ENCODE measurements at regions of chr5 and their contacts with region 1.

Region 1: DNA sequence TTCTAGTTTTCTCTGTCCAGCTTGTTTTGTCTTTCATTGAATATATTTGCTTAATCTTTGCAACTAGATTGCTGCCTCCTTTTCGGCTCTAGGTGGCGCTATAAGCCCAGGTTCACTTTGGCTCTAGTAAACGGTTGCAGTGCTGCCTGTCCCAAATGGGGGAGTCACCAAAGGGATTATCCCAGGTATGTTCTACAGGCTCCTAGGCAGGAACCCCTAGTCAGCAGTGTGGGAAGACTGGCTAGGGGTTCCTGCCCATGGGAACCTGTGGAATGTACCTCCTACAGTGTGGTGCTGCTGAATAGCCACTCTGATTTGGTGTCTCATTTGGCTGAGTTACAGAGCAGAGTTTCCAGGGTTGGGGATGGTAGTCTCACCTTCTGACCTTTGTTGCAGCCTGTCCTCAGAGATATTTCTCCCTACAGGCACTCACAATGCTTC is 85.2 kb downstream of the ARSB start:
- DNase-seq: peak; percentile 74
- ATAC-seq: peak; percentile 98
- H3K4me3 Mint-ChIP-seq: no peak overlapping the region
- H3K27ac Mint-ChIP-seq: no peak overlapping the region
- H3K4me1 Mint-ChIP-seq: peaks cover 2% of the 10 kb centered on the region
- H3K27me3 Mint-ChIP-seq: no peaks in the 10 kb centered on the region
- CTCF ChIP-seq: peak; percentile 79

Region 2: DNA sequence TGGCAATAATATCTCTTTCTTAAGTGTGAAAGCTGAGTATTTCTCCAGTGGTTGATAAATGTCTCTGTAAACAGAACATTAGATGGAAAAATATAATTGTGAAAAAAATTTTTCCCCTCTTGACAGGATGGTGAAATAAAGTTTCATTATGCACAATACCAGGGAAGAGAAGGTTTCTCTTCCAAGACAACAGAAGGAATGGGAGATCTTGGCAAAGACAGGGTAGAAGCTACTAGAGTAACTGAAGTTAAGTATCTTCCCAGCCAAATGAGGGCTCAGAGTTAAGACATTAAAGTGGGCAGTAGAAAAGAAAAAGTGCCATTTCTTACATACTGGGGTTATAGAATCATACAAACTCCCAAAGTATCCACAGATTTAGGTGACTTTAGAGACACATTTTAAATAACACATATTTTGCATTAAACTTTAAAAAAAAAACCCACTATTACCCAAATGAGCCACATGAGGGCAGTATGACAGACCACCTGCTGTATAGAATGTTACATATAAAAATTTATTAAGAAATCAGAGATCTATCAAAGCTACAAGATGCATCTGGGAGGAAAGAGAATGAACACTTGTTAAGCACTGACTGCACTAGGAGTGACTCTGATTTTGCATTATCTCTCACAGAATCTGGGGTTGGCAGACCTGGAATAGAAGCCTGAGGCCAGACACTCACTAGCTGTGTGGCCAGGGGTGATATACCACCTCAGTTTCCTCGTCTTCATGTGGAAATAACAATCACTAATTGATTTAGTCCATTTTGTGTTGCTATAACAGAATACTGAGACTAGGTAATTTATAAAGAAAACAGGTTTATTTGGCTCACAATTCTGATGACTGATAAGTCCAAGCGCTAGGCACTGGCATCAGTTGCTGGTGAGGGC is 13.4 kb before region 1 on chr5:
- CTCF ChIA-PET with region 1: interaction called, 23 read pairs
- POLR2A ChIA-PET with region 1: no interaction called
- DNase-seq: no peak
- ATAC-seq: no peak
- H3K4me3 Mint-ChIP-seq: no peak overlapping the region
- H3K27ac Mint-ChIP-seq: no peak overlapping the region
- H3K4me1 Mint-ChIP-seq: peaks cover 5% of the 10 kb centered on the region; the same call in 1 of the 2 replicates
- H3K27me3 Mint-ChIP-seq: no peaks in the 10 kb centered on the region
- CTCF ChIP-seq: peak; percentile 48; the same call in 1 of the 2 replicates

Region 3: GRCh38 chr5:78920604-78921003 is 20.7 kb after region 1 on chr5:
- CTCF ChIA-PET with region 1: interaction called, 25 read pairs
- POLR2A ChIA-PET with region 1: no interaction called
- DNase-seq: no peak
- ATAC-seq: peak; percentile 91
- H3K4me3 Mint-ChIP-seq: no peak overlapping the region
- H3K27ac Mint-ChIP-seq: no peak overlapping the region
- H3K4me1 Mint-ChIP-seq: peaks cover 12% of the 10 kb centered on the region
- H3K27me3 Mint-ChIP-seq: no peaks in the 10 kb centered on the region
- CTCF ChIP-seq: no peak

Region 4: GRCh38 chr5:78964887-78965286 is 64.9 kb after region 1 on chr5:
- CTCF ChIA-PET with region 1: interaction called, 34 read pairs
- POLR2A ChIA-PET with region 1: no interaction called
- DNase-seq: no peak
- ATAC-seq: 0 out of 2 replicates have a peak, but pooled peaks have one; percentile 53
- H3K4me3 Mint-ChIP-seq: no peak overlapping the region
- H3K27ac Mint-ChIP-seq: no peak overlapping the region
- H3K4me1 Mint-ChIP-seq: no peaks in the 10 kb centered on the region
- H3K27me3 Mint-ChIP-seq: no peaks in the 10 kb centered on the region
- CTCF ChIP-seq: no peak

Region 5: DNA sequence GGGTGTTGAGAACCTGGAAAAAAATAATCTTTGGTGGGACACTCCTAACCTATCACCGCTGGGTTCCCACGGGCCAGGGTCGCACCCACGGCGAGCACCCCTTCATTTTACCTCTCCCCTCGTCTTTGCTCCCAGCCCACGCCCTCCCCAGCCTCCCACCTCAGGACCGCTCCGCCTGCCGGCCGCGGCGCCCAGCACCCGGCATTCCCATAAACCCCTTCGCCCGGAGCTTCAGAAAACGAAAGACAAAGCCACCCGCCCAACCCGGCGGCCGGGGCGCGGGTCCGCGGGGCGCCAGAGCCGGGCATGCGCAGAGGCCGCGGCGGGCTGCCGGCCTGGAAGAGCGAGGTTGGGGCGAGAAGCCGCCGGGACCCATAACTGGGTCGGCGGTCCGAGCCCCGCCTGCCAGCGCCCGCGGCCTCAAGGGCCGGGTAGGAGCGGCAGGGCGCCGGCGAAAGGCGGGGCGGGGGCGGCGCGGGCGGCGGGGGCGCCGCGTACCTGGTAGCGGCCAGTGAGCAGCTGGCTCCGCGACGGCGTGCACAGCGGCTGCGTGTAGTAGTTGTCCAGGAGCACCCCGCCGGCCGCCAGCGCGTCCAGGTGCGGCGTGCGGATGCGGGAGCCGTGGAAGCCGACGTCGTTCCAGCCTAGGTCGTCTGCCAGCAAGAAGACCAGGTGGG is 84.6 kb after region 1 on chr5:
- CTCF ChIA-PET with region 1: interaction called, 10 read pairs
- POLR2A ChIA-PET with region 1: interaction called, 3 read pairs
- DNase-seq: peak; percentile 84
- ATAC-seq: peak; percentile 92
- H3K4me3 Mint-ChIP-seq: peak overlapping the region; percentile 75
- H3K27ac Mint-ChIP-seq: peak overlapping the region; percentile 92; the same call in 1 of the 2 replicates
- H3K4me1 Mint-ChIP-seq: peaks cover 28% of the 10 kb centered on the region
- H3K27me3 Mint-ChIP-seq: peaks cover 10% of the 10 kb centered on the region
- CTCF ChIP-seq: no peak

Measured in WTC11 (cell line).